ENCODE measurements at regions of chr22 and their contacts with region 1.

Region 1: DNA sequence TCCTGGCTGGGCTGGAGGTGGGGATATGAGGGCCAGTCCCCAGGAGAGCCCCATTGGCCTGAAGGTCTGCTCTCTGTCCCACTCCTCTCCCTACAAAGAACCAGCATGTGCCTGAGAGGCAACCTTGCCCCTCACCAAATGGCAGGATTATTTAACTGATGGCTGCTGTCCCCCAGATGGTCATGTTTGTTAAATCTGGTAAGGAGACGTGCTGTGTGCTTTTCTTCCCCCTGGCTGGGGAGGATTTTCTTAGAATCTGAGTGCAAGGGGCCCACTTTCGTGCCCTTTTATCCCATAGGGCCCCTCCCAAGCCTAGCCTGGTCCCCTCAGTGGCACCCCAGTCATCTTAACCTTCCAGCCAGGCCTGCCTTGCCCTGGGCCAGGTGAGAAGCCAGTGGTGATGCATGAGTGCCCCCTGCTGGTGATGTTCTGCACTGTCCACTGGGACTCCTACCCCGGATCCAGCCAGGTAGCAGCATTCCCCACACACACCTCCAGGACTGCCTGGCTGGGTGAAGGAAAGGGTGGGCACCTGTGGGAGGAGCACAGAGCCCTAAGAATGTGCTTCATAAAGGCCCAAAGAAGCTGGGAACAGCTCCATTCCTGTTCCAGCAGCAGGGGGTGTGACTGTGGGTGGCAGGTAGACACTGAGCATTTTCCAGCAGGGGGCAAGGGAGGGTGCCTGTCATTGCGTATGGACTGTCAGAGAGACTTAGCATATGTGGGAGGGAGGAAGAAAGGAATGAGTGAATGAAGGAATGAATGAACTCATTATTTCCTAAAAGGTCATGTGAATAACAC is 28.9 kb downstream of the MFNG start:
- DNase-seq: peak; percentile 87
- H3K4me3 Mint-ChIP-seq: no peak overlapping the region
- H3K27ac Mint-ChIP-seq: no peak overlapping the region
- H3K4me1 Mint-ChIP-seq: peaks cover 4% of the 10 kb centered on the region
- H3K27me3 Mint-ChIP-seq: no peaks in the 10 kb centered on the region

Region 2: DNA sequence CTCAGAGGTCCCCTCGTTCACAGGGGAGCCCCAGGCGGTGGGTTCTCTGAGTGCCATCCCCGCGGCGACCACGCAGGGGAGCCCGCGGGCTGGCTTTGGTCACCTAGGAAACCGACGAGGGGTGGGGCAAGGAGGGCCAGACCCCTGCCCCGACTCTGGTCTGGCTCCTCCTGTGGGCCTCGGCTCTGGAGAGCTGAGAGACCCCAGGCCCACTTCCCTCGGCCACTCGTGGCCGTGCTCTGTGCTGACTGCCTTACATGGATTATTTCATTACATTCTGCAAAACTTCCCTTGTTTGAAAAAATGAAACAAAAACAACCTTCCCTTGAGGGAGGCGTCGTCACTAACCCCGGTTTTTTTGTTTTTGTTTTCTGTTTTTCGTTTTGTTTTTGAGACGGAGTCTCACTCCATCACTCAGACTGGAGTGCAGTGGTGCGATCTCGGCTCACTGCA is 190.1 kb before region 1 on chr22:
- CTCF ChIA-PET with region 1: interaction called, 24 read pairs
- POLR2A ChIA-PET with region 1: interaction called, 3 read pairs
- DNase-seq: peak; percentile 80
- H3K4me3 Mint-ChIP-seq: peak overlapping the region; percentile 67
- H3K27ac Mint-ChIP-seq: peak overlapping the region; percentile 81
- H3K4me1 Mint-ChIP-seq: peaks cover 37% of the 10 kb centered on the region
- H3K27me3 Mint-ChIP-seq: peaks cover 10% of the 10 kb centered on the region